ENCODE measurements at regions of chr7 and their contacts with region 1.

Region 1: GRCh38 chr7:43758029-43758821 is at the start of gene BLVRA:
- DNase-seq: peak; percentile 73
- H3K4me3 Mint-ChIP-seq: peak within 1 kb of the TSS; percentile 80
- H3K27ac Mint-ChIP-seq: peak within 1 kb of the TSS; percentile 61
- H3K4me1 Mint-ChIP-seq: peaks cover 47% of the 10 kb centered on the region
- H3K27me3 Mint-ChIP-seq: peaks cover 10% of the 10 kb centered on the region
- total RNA-seq, gene BLVRA: 38.1 to 42.4 TPM

Region 2: GRCh38 chr7:43729214-43729923 is 28.9 kb before region 1 on chr7 and contains the start of gene COA1:
- CTCF ChIA-PET with region 1: interaction called, 3 read pairs
- POLR2A ChIA-PET with region 1: interaction called, 32 read pairs
- DNase-seq: peak; percentile 82
- H3K4me3 Mint-ChIP-seq: peak within 1 kb of the TSS; percentile 91
- H3K27ac Mint-ChIP-seq: peak within 1 kb of the TSS; percentile 73
- H3K4me1 Mint-ChIP-seq: peaks cover 43% of the 10 kb centered on the region
- H3K27me3 Mint-ChIP-seq: no peaks in the 10 kb centered on the region
- total RNA-seq, gene COA1: 56.0 to 57.3 TPM

Region 3: DNA sequence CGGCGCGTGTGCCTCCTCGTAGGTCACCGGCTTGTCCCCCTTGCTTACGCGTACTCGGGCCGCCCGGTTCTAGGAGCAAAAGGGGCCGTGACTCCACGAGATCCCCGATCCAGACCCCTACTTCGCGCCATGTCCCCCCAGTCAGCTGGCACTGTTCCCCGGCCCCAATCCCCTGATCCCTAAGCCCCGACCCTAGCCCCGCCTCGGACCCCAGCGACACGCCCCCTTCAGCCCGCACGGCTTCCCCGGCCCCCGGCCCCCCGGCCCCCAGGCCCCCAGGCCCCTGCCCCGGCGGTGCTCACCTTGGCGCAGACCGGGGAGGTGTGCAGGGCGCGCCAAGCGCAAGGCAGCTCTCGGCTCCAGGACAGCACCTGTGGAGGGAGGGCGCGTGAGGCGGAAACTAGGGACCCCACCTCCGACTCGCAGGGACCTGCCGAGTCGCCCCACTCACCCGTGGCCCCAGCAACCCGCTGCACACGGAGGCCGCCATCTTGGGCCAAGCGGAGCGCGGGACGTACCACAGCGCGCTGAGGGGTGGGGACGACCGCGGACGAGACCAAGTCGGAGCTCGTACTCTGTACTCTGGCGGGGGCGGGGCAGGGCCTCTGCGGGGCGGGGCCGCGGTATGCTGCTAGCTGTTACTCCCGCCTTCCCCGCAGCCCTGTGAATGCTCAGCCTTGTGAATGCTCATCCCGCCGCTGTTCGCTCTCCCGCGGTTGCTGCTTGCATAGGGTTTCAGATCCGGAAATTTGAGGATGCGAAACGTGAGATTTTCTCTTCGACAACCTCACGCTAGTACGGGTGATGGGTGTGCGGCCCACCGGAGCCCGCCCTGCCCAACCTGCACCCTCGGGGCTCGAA is 111.0 kb after region 1 on chr7 and contains the start of gene MRPS24:
- CTCF ChIA-PET with region 1: no interaction called
- POLR2A ChIA-PET with region 1: no interaction called
- DNase-seq: peak; percentile 95
- H3K4me3 Mint-ChIP-seq: peak within 1 kb of the TSS; percentile 76
- H3K27ac Mint-ChIP-seq: peak within 1 kb of the TSS; percentile 42
- H3K4me1 Mint-ChIP-seq: peaks cover 18% of the 10 kb centered on the region
- H3K27me3 Mint-ChIP-seq: peaks cover 5% of the 10 kb centered on the region
- total RNA-seq, gene MRPS24: 74.6 to 76.5 TPM

Measured in activated CD4-positive, alpha-beta memory T cell treated with anti-CD3 and anti-CD28 coated beads, Interleukin-2, amount 10 ng/mL, durations not matched to agents 7 days and 5 days (primary cell).